MCF 10A (cell line): ENCODE measurements at regions of chr13 and their contacts with region 1.

Region 1: DNA sequence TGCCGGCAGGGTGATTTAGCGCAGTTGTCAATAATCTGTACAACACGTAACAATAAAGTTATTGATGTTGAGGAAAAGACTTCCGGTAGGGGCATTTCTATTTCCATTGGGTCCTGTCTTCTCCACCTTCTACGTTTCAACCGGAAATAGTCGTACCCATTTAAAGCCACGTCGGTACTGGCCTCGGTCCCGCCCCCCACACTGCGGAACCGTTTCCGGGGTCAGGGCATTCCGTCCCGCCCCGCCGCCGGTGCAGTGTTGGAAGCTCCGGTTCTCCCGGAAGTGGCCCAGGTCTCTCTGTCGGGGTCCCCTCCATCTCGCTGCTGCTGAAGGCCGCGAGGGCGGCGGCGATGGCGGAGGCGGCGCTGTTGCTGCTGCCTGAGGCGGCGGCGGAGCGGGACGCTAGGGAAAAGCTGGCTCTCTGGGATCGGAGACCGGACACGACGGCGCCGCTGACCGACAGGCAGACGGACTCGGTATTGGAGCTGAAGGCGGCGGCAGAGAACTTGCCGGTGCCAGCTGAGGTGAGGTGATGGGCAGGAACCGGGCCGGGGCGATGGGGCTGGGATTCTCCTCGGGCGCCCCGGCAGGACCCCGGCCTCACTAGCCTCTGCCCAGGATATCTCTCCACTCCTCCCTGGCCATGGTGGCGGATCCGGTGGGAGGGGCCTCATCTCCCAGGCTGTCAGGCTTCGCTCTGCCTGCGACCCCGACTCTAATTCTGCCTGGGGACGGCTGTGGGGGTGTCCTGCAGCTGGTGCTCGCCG is at the start of gene COG3:
- DNase-seq: peak; percentile 97
- H3K4me3 Mint-ChIP-seq: peak within 1 kb of the TSS; percentile 90
- H3K27ac Mint-ChIP-seq: peak within 1 kb of the TSS; percentile 90
- H3K4me1 Mint-ChIP-seq: peaks cover 30% of the 10 kb centered on the region
- H3K27me3 Mint-ChIP-seq: no peaks in the 10 kb centered on the region
- CTCF ChIP-seq: peak; percentile 13
- total RNA-seq, gene COG3: 42.8 and 44.1 TPM in 2 replicates

Region 2: DNA sequence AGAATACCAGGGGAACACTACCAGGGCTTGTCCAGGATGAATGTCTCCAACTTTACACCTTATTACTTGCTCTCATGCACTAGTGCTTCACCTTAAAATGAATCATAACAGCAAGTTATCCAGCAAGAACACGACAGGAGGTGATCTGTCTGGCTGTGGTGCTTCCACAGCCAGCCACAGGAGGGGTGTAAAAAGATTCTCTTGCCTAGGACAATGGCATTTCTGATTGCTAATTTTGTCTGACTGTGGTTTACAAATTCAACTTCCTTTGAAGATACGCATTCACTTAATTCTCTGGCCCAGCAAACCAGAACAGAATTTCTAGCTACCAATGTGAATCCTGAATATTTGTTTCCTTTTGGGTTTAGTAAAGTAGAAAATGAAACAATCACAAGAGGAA is 23.2 kb before region 1 on chr13:
- CTCF ChIA-PET with region 1: interaction called, 4 read pairs
- POLR2A ChIA-PET with region 1: interaction called, 5 read pairs
- intact Hi-C with region 1: loop called (anchors 1 kb)
- DNase-seq: peak; percentile 56
- H3K4me3 Mint-ChIP-seq: no peak overlapping the region
- H3K27ac Mint-ChIP-seq: no peak overlapping the region
- H3K4me1 Mint-ChIP-seq: peaks cover 25% of the 10 kb centered on the region
- H3K27me3 Mint-ChIP-seq: no peaks in the 10 kb centered on the region
- CTCF ChIP-seq: peak; percentile 29

Region 3: DNA sequence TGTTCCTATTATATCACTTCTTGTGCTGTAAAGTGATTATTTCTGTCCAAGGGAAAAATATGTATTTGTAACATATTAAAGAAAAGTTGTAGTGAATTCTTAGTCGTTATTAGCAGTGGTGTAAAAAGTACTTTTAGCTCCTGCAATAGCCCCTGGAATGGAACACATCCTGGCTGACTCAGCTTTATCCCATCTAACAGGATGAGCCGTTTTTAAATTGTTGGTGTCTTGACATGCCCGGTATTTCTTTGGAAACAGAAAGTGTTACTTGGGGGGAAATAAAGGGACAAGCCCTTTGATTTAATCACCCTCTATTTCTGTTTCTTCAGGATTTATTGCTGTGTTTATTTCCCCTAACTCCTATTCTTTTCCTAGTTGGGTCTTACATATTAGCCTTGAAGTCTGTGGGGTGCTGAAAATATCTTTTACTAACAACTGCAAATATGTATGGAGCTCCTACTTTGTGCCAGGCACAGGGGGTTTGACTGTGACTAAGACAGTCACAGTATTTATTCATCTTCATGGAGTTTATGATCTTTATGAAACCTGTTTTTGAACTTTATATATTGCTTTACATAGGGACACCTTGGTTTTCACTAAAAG is 17.8 kb after region 1 on chr13:
- CTCF ChIA-PET with region 1: interaction called, 3 read pairs
- POLR2A ChIA-PET with region 1: interaction called, 133 read pairs
- intact Hi-C with region 1: no loop called
- DNase-seq: peak; percentile 61
- H3K4me3 Mint-ChIP-seq: peak overlapping the region; percentile 54
- H3K27ac Mint-ChIP-seq: peak overlapping the region; percentile 91
- H3K4me1 Mint-ChIP-seq: peaks cover 13% of the 10 kb centered on the region
- H3K27me3 Mint-ChIP-seq: no peaks in the 10 kb centered on the region
- CTCF ChIP-seq: no peak

Region 4: DNA sequence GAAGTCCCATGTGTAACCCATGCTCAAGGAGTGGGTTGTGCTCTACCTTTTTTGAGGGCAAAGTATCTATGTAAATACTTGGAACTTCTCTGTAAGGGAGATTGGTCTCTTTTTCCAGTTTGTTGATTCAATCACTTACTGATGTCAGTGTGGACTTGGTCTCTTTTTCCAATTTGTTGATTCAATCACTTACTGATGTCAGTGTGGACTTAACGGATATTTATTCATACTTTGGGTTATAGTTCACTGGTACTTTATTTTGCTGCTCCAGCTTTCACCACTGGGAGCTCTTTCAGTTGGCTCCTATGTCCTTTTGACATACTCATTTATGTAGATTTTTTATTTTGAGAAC is 36.3 kb after region 1 on chr13:
- CTCF ChIA-PET with region 1: no interaction called
- POLR2A ChIA-PET with region 1: no interaction called
- intact Hi-C with region 1: no loop called
- DNase-seq: no peak
- H3K4me3 Mint-ChIP-seq: no peak overlapping the region
- H3K27ac Mint-ChIP-seq: peak overlapping the region; percentile 90
- H3K4me1 Mint-ChIP-seq: peaks cover 12% of the 10 kb centered on the region
- H3K27me3 Mint-ChIP-seq: no peaks in the 10 kb centered on the region
- CTCF ChIP-seq: no peak